SK-MEL-5 (cell line): ENCODE measurements at regions of chr12 and their contacts with region 1.

Region 1: DNA sequence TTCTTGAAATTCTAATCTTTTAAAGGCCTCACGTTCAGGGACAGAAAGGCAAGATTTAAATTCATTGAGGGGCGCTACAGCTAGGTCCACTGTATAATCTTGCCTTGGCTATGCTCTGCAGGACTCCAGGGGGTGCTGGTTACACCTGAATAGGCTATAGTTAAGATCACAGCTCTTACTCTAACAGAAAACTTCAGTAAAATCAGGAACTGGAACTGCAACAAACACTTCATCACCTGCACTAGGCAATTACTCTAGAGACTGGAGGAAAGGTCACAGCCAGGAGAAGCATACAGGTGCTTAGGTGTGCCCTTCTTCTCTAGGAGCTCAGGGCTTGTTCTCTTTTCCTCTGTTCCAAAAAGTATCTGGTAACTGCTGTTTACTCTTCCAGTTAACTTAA is 20.9 kb downstream of the SLCO1C1 start:
- DNase-seq: no peak

Region 2: DNA sequence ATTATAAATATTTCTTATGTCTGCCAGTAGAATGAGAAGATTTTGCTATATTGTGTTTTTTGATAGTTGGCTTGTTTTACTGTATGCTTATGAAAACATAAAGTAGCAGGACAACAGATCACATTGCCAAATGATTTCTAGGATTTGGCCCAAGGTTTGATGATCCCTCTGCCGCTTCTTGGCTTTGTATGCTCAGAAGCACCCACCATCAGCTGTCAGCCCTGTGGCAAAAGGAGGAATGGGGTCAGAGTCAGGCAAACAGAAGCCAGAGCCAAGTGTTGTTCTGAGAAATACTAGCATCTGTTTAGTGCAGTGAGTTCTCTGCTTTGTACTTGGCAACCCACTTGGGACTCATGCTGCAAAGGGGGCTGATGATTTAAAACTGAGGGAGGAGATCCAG is 195.5 kb before region 1 on chr12:
- in situ Hi-C with region 1: no loop called
- DNase-seq: no peak

Region 3: GRCh38 chr12:20832911-20833310 is 116.9 kb after region 1 on chr12:
- in situ Hi-C with region 1: loop called (anchors 25 kb)
- DNase-seq: peak; percentile 94

Region 4: DNA sequence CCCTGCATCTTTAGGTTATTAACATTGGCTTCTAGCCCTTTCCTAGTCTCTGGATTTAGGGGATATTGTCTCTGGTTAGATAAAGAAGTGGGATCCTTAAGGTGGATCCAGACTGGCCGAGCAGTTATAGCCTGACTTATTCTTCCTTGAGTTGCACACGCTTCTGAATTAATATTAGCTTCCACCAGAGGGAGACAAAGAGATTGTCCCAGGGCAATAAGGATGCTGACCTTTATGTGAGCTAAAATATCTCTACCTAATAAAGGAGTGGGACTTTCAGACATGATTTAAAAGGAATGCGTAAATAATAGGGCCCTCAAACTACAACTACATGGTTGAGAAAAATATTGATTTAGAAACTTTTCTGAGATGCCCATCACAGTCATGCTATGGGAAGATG is 234.2 kb after region 1 on chr12:
- in situ Hi-C with region 1: no loop called
- DNase-seq: peak; percentile 68